Dorsolateral prefrontal cortex (tissue), 120 donors: ENCODE measurements at regions of chr9 and their contacts with region 1.

Region 1: DNA sequence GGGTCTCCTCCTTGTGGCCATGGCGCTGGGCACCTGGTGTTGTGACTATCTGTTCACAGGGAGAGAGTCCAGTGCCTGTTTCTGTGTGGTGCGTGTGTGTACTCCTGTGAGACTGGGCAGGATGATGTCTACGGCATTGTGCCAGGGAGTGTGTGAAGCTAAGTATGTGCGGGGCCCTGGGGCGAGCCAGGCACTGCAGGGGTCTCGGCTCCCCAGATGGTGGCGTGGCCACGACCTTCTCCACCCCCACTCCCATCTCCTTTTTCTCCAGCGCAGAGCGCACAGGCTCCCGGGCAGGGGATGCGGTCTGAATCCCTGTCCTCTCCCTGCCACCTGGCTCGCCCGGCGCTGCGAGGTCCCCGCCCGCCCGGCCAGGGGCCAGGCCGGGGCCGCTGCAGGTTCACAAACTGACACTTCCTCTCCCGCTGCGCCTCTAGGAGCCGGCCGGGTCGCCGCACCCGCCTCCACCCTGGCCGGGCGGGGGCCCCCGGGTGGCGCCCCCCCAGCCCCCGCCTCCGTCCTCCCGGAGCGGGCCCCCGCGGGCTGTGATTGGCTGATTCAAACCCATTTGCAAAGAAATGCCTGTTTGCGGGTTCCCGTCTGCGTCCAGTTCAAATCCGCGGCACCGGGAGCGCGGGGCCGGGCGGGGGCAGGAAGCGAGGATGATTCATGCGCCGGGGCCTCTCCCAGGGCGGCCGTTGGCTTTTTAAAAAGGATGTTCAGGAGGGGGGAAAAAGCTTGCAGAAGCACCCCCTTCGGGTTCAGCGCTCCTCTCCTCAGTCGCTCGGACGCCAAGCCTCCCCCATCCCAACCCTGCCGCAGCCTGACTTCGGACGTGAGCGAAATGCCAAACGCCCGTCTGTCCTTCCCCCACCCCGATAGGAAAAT is 790 bp downstream of the PHF19 start:
- DNase-seq: peak; percentile 74 to 90 (median 84)
- H3K4me3 ChIP-seq: peak overlapping the region; percentile 40 to 86 (median 75)
- H3K27ac ChIP-seq: peak overlapping the region; percentile 80 to 99 (median 95)
- H3K27me3 ChIP-seq: no peaks in the 10 kb centered on the region
- CTCF ChIP-seq: peak in 14 of 56 donors; percentile 6 to 51 (median 19)

Region 2: GRCh38 chr9:120714088-120714845 is 161.9 kb before region 1 on chr9 and contains the start of gene MEGF9:
- intact Hi-C with region 1: loop called in 1 of 2 experiments (anchors 10 kb)
- DNase-seq: peak; percentile 99 to 100 (median 99)
- H3K4me3 ChIP-seq: peak within 1 kb of the TSS; percentile 63 to 99 (median 90)
- H3K27ac ChIP-seq: peak within 1 kb of the TSS; percentile 86 to 99 (median 96)
- H3K27me3 ChIP-seq: no peaks in the 10 kb centered on the region
- CTCF ChIP-seq: peak in 29 of 56 donors; percentile 5 to 56 (median 22)
- total RNA-seq, gene MEGF9: 47.2 to 92.6 (median 64.9) TPM

Region 3: GRCh38 chr9:120783602-120784047 is 92.6 kb before region 1 on chr9:
- intact Hi-C with region 1: no loop called
- DNase-seq: no peak
- H3K4me3 ChIP-seq: no peak overlapping the region
- H3K27ac ChIP-seq: peak overlapping the region in 1 of 59 donors; percentile 15
- H3K27me3 ChIP-seq: no peaks in the 10 kb centered on the region
- CTCF ChIP-seq: no peak

Region 4: DNA sequence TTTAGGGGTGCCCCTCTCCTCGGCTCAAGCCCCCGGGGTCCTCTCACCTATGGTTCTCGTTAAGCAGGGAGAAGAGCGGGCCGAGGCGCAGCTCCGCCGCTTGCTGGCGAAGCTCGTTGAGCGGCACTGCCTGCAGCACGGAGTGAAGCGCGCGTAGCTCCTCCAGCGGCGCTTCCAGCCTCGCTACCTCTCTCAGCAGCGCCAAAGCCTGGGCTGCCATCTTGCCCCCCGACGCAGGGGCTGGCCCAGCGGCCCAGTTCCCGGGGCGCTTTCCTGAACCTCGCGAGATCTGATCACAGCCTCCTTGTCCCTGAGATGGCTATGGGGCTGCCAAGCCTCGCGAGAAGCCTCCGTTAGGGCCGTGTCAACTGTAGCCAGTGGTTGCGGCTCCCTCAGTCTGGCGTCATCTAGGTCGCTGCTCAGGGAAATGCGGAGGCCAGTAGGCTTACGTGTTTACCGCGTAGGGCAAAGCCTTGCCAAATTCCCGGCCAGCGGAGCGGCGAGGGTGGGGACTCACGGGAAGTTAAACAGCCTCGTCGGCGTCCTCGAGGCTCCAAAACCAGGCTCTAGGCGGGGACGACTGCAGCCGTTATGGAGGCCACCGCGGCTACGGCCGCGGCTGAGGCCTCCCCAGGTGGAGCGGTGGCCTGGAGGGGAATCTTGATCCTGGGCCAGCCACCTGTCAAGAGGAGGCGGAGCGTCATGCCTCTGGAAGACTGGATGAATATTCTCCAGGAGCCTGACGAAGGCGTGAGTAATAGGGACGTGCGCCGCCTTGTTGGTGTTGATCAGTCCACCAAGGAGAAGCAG is 33.3 kb before region 1 on chr9 and contains the start of gene PSMD5:
- intact Hi-C with region 1: loop called in 1 of 2 experiments (anchors 5 kb)
- DNase-seq: peak; percentile 72 to 99 (median 95)
- H3K4me3 ChIP-seq: peak within 1 kb of the TSS; percentile 59 to 99 (median 82)
- H3K27ac ChIP-seq: peak within 1 kb of the TSS; percentile 55 to 99 (median 93)
- H3K27me3 ChIP-seq: no peaks in the 10 kb centered on the region
- CTCF ChIP-seq: peak in 34 of 56 donors; percentile 4 to 57 (median 29)
- total RNA-seq, gene PSMD5: 18.8 to 51.5 (median 32.6) TPM

Region 5: DNA sequence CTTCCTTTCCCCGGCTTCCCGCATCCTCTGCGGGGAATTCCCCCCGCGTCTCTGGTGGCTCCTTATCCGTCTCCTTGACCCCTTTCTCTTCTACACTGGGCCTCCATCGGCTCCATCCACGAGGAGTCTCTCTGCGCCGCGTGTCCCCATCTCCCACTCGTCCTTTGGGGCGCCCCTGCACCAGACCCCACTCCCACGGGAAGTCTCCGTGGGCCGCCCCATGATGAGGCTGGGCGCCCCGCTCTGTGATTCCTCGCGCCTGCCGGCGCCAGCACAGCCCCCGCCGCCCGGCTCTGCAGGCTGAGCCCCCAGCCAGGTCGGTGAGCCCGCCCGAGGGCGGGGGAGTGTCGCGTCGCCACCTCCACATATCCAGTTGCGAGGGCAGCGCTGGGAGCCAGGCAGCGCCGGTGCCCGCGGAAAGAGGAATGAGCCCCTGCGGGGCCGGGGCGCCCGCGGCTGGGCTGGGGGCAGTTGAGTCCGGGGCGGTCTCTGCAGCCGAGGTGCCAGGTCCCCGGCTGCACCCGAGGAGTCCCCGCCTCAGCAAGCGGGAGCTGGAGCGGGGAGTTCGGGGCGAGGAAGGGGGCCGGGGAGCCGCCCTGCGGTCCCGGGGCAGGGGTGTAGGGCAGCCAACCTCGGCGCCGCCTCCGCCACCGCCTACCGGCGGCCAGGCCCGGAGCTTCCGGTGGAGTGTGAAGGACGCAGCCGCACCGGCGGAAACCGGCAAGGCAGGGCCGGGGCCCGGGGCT is 52.5 kb after region 1 on chr9:
- intact Hi-C with region 1: loop called in 1 of 2 experiments (anchors 2 kb)
- DNase-seq: peak in 9 of 10 donors; percentile 45 to 82 (median 69)
- H3K4me3 ChIP-seq: peak overlapping the region; percentile 56 to 94 (median 82)
- H3K27ac ChIP-seq: peak overlapping the region; percentile 61 to 96 (median 89)
- H3K27me3 ChIP-seq: no peaks in the 10 kb centered on the region
- CTCF ChIP-seq: peak in 34 of 56 donors; percentile 8 to 54 (median 37)

Region 6: GRCh38 chr9:121074635-121075385 is 198.6 kb after region 1 on chr9 and contains the start of gene CNTRL:
- intact Hi-C with region 1: loop called in 1 of 2 experiments (anchors 10 kb)
- DNase-seq: peak; percentile 76 to 91 (median 86)
- H3K4me3 ChIP-seq: peak within 1 kb of the TSS; percentile 51 to 94 (median 81)
- H3K27ac ChIP-seq: peak within 1 kb of the TSS; percentile 55 to 96 (median 91)
- H3K27me3 ChIP-seq: no peaks in the 10 kb centered on the region
- CTCF ChIP-seq: peak in 22 of 56 donors; percentile 5 to 40 (median 27)
- total RNA-seq, gene CNTRL: 12.3 to 35.3 (median 21.4) TPM